SK-N-SH (cell line): ENCODE measurements at regions of chr11 and their contacts with region 1.

Region 1: GRCh38 chr11:61384271-61385242 is 7.8 kb upstream of the TMEM216 start:
- DNase-seq: no peak
- H3K4me3 ChIP-seq: no peak overlapping the region
- H3K27ac ChIP-seq: no peak overlapping the region
- H3K4me1 ChIP-seq: no peaks in the 10 kb centered on the region; a peak in 1 of 4 replicates
- H3K27me3 ChIP-seq: no peaks in the 10 kb centered on the region
- CTCF ChIP-seq: no peak
- EP300 ChIP-seq: no peak
- RAD21 ChIP-seq: peak; percentile 34

Region 2: GRCh38 chr11:61254403-61255025 is 130.0 kb before region 1 on chr11:
- CTCF ChIA-PET with region 1: interaction called, 17 read pairs
- POLR2A ChIA-PET with region 1: no interaction called
- DNase-seq: peak; percentile 76
- H3K4me3 ChIP-seq: no peak overlapping the region; a peak in 1 of 4 replicates
- H3K27ac ChIP-seq: no peak overlapping the region
- H3K4me1 ChIP-seq: peaks cover 0 to 22% of the 10 kb centered on the region in 2 experiments; a peak in 1 of 4 replicates
- H3K27me3 ChIP-seq: no peaks in the 10 kb centered on the region
- CTCF ChIP-seq: peak; percentile 77
- EP300 ChIP-seq: no peak
- RAD21 ChIP-seq: peak; percentile 75

Region 3: GRCh38 chr11:61315260-61315659 is 69.3 kb before region 1 on chr11:
- CTCF ChIA-PET with region 1: interaction called, 16 read pairs
- POLR2A ChIA-PET with region 1: no interaction called
- DNase-seq: no peak
- H3K4me3 ChIP-seq: no peak overlapping the region
- H3K27ac ChIP-seq: no peak overlapping the region
- H3K4me1 ChIP-seq: no peaks in the 10 kb centered on the region
- H3K27me3 ChIP-seq: no peaks in the 10 kb centered on the region
- CTCF ChIP-seq: no peak
- EP300 ChIP-seq: no peak
- RAD21 ChIP-seq: no peak

Region 4: GRCh38 chr11:61332797-61333549 is 51.6 kb before region 1 on chr11 and contains the starts of genes DDB1 and TKFC:
- CTCF ChIA-PET with region 1: interaction called, 300 read pairs
- POLR2A ChIA-PET with region 1: interaction called, 15 read pairs
- DNase-seq: peak; percentile 99
- H3K4me3 ChIP-seq: peak within 1 kb of the TSS; percentile 92 to 93
- H3K27ac ChIP-seq: peak within 1 kb of the TSS; percentile 74 to 96
- H3K4me1 ChIP-seq: peaks cover 21 to 40% of the 10 kb centered on the region in 2 experiments
- H3K27me3 ChIP-seq: no peaks in the 10 kb centered on the region
- CTCF ChIP-seq: no peak
- EP300 ChIP-seq: no peak
- RAD21 ChIP-seq: no peak
- polyA plus RNA-seq, gene DDB1: 170 and 224 TPM in 2 replicates
- polyA plus RNA-seq, gene TKFC: 71.0 and 72.0 TPM in 2 replicates

Region 5: GRCh38 chr11:61347916-61348461 is 36.6 kb before region 1 on chr11:
- CTCF ChIA-PET with region 1: interaction called, 24 read pairs
- POLR2A ChIA-PET with region 1: interaction called, 18 read pairs
- DNase-seq: no peak
- H3K4me3 ChIP-seq: no peak overlapping the region
- H3K27ac ChIP-seq: no peak overlapping the region; a peak in 1 of 4 replicates
- H3K4me1 ChIP-seq: peaks cover 0 to 29% of the 10 kb centered on the region in 2 experiments; a peak in 1 of 4 replicates
- H3K27me3 ChIP-seq: no peaks in the 10 kb centered on the region
- CTCF ChIP-seq: no peak
- EP300 ChIP-seq: no peak
- RAD21 ChIP-seq: no peak

Region 6: GRCh38 chr11:61403658-61404057 is 19.1 kb after region 1 on chr11:
- CTCF ChIA-PET with region 1: interaction called, 33 read pairs
- POLR2A ChIA-PET with region 1: no interaction called
- DNase-seq: no peak
- H3K4me3 ChIP-seq: no peak overlapping the region
- H3K27ac ChIP-seq: no peak overlapping the region
- H3K4me1 ChIP-seq: no peaks in the 10 kb centered on the region
- H3K27me3 ChIP-seq: no peaks in the 10 kb centered on the region
- CTCF ChIP-seq: no peak
- EP300 ChIP-seq: no peak
- RAD21 ChIP-seq: no peak

Region 7: GRCh38 chr11:61477727-61478148 is 93.2 kb after region 1 on chr11:
- CTCF ChIA-PET with region 1: no interaction called
- POLR2A ChIA-PET with region 1: no interaction called
- DNase-seq: peak; percentile 89
- H3K4me3 ChIP-seq: no peak overlapping the region; a peak in 1 of 4 replicates
- H3K27ac ChIP-seq: no peak overlapping the region
- H3K4me1 ChIP-seq: peaks cover 0 to 12% of the 10 kb centered on the region in 2 experiments; a peak in 1 of 4 replicates
- H3K27me3 ChIP-seq: no peaks in the 10 kb centered on the region
- CTCF ChIP-seq: peak; percentile 92
- EP300 ChIP-seq: no peak
- RAD21 ChIP-seq: peak; percentile 88